Heart left ventricle (tissue), 16 donors: ENCODE measurements at regions of chr18 and their contacts with region 1.

Region 1: GRCh38 chr18:5943514-5943913 is 48.2 kb upstream of the TMEM200C start:
- DNase-seq: peak in 2 of 5 donors; percentile 25 to 54
- ATAC-seq: no peak
- H3K4me3 ChIP-seq: no peak overlapping the region
- H3K27ac ChIP-seq: no peak overlapping the region
- H3K4me1 ChIP-seq: peaks cover 0 to 4% (median 0%) of the 10 kb centered on the region in 12 donors
- H3K27me3 ChIP-seq: peaks cover 0 to 10% (median 0%) of the 10 kb centered on the region in 9 donors
- CTCF ChIP-seq: no peak
- POLR2A ChIP-seq: no peak

Region 2: GRCh38 chr18:6004683-6005082 is 61.2 kb after region 1 on chr18:
- intact Hi-C with region 1: loop called in 1 of 10 experiments (anchors 10 kb)
- DNase-seq: no peak
- ATAC-seq: no peak
- H3K4me3 ChIP-seq: no peak overlapping the region
- H3K27ac ChIP-seq: no peak overlapping the region
- H3K4me1 ChIP-seq: no peaks in the 10 kb centered on the region
- H3K27me3 ChIP-seq: no peaks in the 10 kb centered on the region
- CTCF ChIP-seq: no peak
- POLR2A ChIP-seq: no peak